HepG2 (cell line): ENCODE measurements at regions of chr12 and their contacts with region 1.

Region 1: GRCh38 chr12:50283229-50283923 is at the start of gene LIMA1:
- DNase-seq: peak; percentile 76
- ATAC-seq: peak; percentile 96
- H3K4me3 ChIP-seq: peak within 1 kb of the TSS; percentile 83 to 94 (median 92)
- H3K27ac ChIP-seq: peak within 1 kb of the TSS; percentile 80
- H3K4me1 ChIP-seq: peaks cover 48% of the 10 kb centered on the region
- H3K27me3 ChIP-seq: no peaks in the 10 kb centered on the region; a peak in 1 of 5 replicates
- CTCF ChIP-seq: peak; percentile 14; the same call in 1 of the 2 replicates
- EP300 ChIP-seq: no peak
- POLR2A ChIP-seq: peak; percentile 88 to 95
- RAD21 ChIP-seq: peak; percentile 58
- total RNA-seq, gene LIMA1: 13.0 and 19.3 TPM in 2 replicates

Region 2: GRCh38 chr12:50241178-50241577 is 42.2 kb before region 1 on chr12:
- CTCF ChIA-PET with region 1: no interaction called
- POLR2A ChIA-PET with region 1: interaction called, 14 read pairs
- in situ Hi-C with region 1: no loop called
- intact Hi-C with region 1: loop called (anchors 2 kb)
- DNase-seq: peak; percentile 88
- ATAC-seq: peak; percentile 87
- H3K4me3 ChIP-seq: no peak overlapping the region; a peak in 1 of 6 replicates
- H3K27ac ChIP-seq: no peak overlapping the region
- H3K4me1 ChIP-seq: peaks cover 45% of the 10 kb centered on the region
- H3K27me3 ChIP-seq: no peaks in the 10 kb centered on the region
- CTCF ChIP-seq: no peak
- EP300 ChIP-seq: peak in 1 of 2 experiments; percentile 86; a peak in 2 of 4 replicates
- POLR2A ChIP-seq: no peak
- RAD21 ChIP-seq: no peak